ENCODE measurements at regions of chr2 and their contacts with region 1.

Region 1: DNA sequence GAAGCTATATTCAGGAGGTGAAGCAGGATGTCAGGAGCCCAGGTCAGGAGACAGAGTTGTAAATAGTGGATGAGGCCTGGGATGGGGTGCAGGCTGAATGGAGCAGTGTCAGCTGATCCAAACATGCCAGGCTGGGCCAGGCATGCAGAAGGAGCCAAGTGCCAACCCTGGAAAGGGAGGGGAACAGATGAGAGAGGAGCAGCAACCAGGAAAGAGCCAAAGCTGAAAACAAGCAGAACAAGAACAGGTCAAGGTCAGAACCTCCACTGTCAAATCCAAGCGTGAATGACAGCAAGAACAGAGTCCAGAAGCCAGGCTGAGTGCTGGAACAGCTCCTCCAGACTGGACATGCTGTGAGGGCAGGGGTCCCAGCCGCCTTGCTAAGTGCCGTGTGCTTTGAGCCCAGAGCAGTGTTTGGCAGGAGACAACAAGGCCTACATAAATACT is 49.2 kb upstream of the PPP1CB start:
- DNase-seq: no peak
- ATAC-seq: peak; percentile 98

Region 2: GRCh38 chr2:28606986-28607441 is 95.4 kb before region 1 on chr2:
- intact Hi-C with region 1: loop called (anchors 5 kb)
- DNase-seq: no peak
- ATAC-seq: peak; percentile 38

Measured in Right ventricle myocardium inferior (tissue), 1 donor.